ENCODE measurements at regions of chr6 and their contacts with region 1.

Region 1: GRCh38 chr6:15621203-15622044 is 41.4 kb downstream of the DTNBP1 start:
- DNase-seq: peak; percentile 62
- ATAC-seq: peak; percentile 100
- H3K4me3 ChIP-seq: no peak overlapping the region
- H3K27ac ChIP-seq: peak overlapping the region; percentile 82
- H3K4me1 ChIP-seq: peaks cover 12% of the 10 kb centered on the region
- H3K27me3 ChIP-seq: no peaks in the 10 kb centered on the region
- CTCF ChIP-seq: no peak
- EP300 ChIP-seq: 0 out of 4 replicates have a peak, but pooled peaks of 1 of the 2 experiments have one; percentile 17
- POLR2A ChIP-seq: peak; percentile 54; the same call in 1 of the 2 replicates
- RAD21 ChIP-seq: no peak; the same call in 1 of the 2 replicates

Region 2: GRCh38 chr6:14210663-14211561 is 1410.5 kb before region 1 on chr6:
- CTCF ChIA-PET with region 1: interaction called, 5 read pairs
- POLR2A ChIA-PET with region 1: no interaction called
- RAD21 ChIA-PET with region 1: interaction called, 4 read pairs
- SMC1A ChIA-PET with region 1: interaction called, 3 read pairs
- in situ Hi-C with region 1: loop called (anchors 25 kb)
- intact Hi-C with region 1: loop called (anchors 5 kb)
- DNase-seq: peak; percentile 48
- ATAC-seq: peak; percentile 98
- H3K4me3 ChIP-seq: peak overlapping the region; percentile 91
- H3K27ac ChIP-seq: peak overlapping the region; percentile 81
- H3K4me1 ChIP-seq: peaks cover 16% of the 10 kb centered on the region
- H3K27me3 ChIP-seq: no peaks in the 10 kb centered on the region
- CTCF ChIP-seq: peak; percentile 49 to 80 (median 60); a peak in 5 of 6 replicates
- EP300 ChIP-seq: no peak
- POLR2A ChIP-seq: peak; percentile 78
- RAD21 ChIP-seq: peak; percentile 91

Region 3: GRCh38 chr6:15458021-15458459 is 163.4 kb before region 1 on chr6:
- CTCF ChIA-PET with region 1: interaction called, 23 read pairs
- POLR2A ChIA-PET with region 1: interaction called, 4 read pairs
- RAD21 ChIA-PET with region 1: interaction called, 11 read pairs
- SMC1A ChIA-PET with region 1: interaction called, 24 read pairs
- in situ Hi-C with region 1: no loop called
- intact Hi-C with region 1: no loop called
- DNase-seq: peak; percentile 40
- ATAC-seq: peak; percentile 95
- H3K4me3 ChIP-seq: peak overlapping the region; percentile 9; the same call in 1 of the 2 replicates
- H3K27ac ChIP-seq: peak overlapping the region; percentile 37
- H3K4me1 ChIP-seq: peaks cover 17% of the 10 kb centered on the region
- H3K27me3 ChIP-seq: no peaks in the 10 kb centered on the region
- CTCF ChIP-seq: no peak
- EP300 ChIP-seq: 0 out of 4 replicates have a peak, but pooled peaks of 1 of the 2 experiments have one; percentile 35
- POLR2A ChIP-seq: no peak
- RAD21 ChIP-seq: no peak

Region 4: GRCh38 chr6:15522427-15522826 is 99.0 kb before region 1 on chr6:
- CTCF ChIA-PET with region 1: interaction called, 50 read pairs
- POLR2A ChIA-PET with region 1: no interaction called
- RAD21 ChIA-PET with region 1: interaction called, 11 read pairs
- SMC1A ChIA-PET with region 1: interaction called, 9 read pairs
- in situ Hi-C with region 1: no loop called
- intact Hi-C with region 1: loop called (anchors 2 kb)
- DNase-seq: no peak
- ATAC-seq: peak; percentile 64
- H3K4me3 ChIP-seq: no peak overlapping the region
- H3K27ac ChIP-seq: no peak overlapping the region
- H3K4me1 ChIP-seq: no peaks in the 10 kb centered on the region
- H3K27me3 ChIP-seq: no peaks in the 10 kb centered on the region
- CTCF ChIP-seq: no peak
- EP300 ChIP-seq: no peak
- POLR2A ChIP-seq: no peak
- RAD21 ChIP-seq: no peak

Region 5: GRCh38 chr6:15608396-15608795 is 13.0 kb before region 1 on chr6:
- CTCF ChIA-PET with region 1: interaction called, 33 read pairs
- POLR2A ChIA-PET with region 1: interaction called, 4 read pairs
- RAD21 ChIA-PET with region 1: interaction called, 16 read pairs
- SMC1A ChIA-PET with region 1: interaction called, 165 read pairs
- in situ Hi-C with region 1: no loop called
- intact Hi-C with region 1: no loop called
- DNase-seq: no peak
- ATAC-seq: no peak
- H3K4me3 ChIP-seq: no peak overlapping the region
- H3K27ac ChIP-seq: no peak overlapping the region
- H3K4me1 ChIP-seq: 0 out of 2 replicates have a peak, but pooled peaks cover 7% of the 10 kb centered on the region
- H3K27me3 ChIP-seq: no peaks in the 10 kb centered on the region
- CTCF ChIP-seq: no peak
- EP300 ChIP-seq: no peak
- POLR2A ChIP-seq: no peak
- RAD21 ChIP-seq: no peak

Region 6: GRCh38 chr6:15682965-15683822 is 61.8 kb after region 1 on chr6:
- CTCF ChIA-PET with region 1: interaction called, 12 read pairs
- POLR2A ChIA-PET with region 1: interaction called, 3 read pairs
- RAD21 ChIA-PET with region 1: interaction called, 3 read pairs
- SMC1A ChIA-PET with region 1: interaction called, 10 read pairs
- in situ Hi-C with region 1: no loop called
- intact Hi-C with region 1: no loop called
- DNase-seq: peak; percentile 40
- ATAC-seq: peak; percentile 93
- H3K4me3 ChIP-seq: no peak overlapping the region
- H3K27ac ChIP-seq: no peak overlapping the region
- H3K4me1 ChIP-seq: 0 out of 2 replicates have a peak, but pooled peaks cover 3% of the 10 kb centered on the region
- H3K27me3 ChIP-seq: 0 out of 4 replicates have a peak, but pooled peaks cover 0 to 3% of the 10 kb centered on the region in 2 experiments
- CTCF ChIP-seq: no peak
- EP300 ChIP-seq: peak; percentile 57 to 68; a peak in 3 of 4 replicates
- POLR2A ChIP-seq: no peak
- RAD21 ChIP-seq: no peak

Region 7: DNA sequence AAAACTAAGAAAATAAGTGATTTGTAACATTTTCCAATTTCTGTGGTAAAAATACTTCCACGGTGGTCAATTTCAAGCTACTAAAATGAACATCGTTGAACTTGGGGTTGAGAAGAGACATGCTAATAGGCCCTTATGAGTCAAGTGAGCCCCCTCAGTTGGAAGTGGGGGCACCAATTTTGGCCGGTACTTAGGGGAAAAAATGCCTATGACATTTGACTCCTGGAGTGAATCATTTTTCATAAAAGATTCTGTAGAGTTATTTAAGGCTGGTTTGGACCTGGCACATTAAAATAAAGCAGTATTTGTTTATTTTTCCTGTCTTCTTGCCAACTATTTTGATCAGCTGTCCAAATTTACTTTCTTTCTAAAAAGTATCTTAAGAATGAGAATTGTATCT is 1739.6 kb after region 1 on chr6:
- CTCF ChIA-PET with region 1: no interaction called
- POLR2A ChIA-PET with region 1: no interaction called
- RAD21 ChIA-PET with region 1: no interaction called
- SMC1A ChIA-PET with region 1: no interaction called
- in situ Hi-C with region 1: no loop called
- intact Hi-C with region 1: no loop called
- DNase-seq: no peak
- ATAC-seq: peak; percentile 61
- H3K4me3 ChIP-seq: no peak overlapping the region
- H3K27ac ChIP-seq: no peak overlapping the region
- H3K4me1 ChIP-seq: no peaks in the 10 kb centered on the region
- H3K27me3 ChIP-seq: no peaks in the 10 kb centered on the region
- CTCF ChIP-seq: no peak
- EP300 ChIP-seq: no peak
- POLR2A ChIP-seq: no peak
- RAD21 ChIP-seq: no peak

Measured in GM12878 (cell line).